Posterior vena cava (tissue), 2 donors: ENCODE measurements at regions of chr1 and their contacts with region 1.

Region 1: GRCh38 chr1:167687919-167688519 is 33.8 kb upstream of the MPZL1 start:
- DNase-seq: no peak

Region 2: DNA sequence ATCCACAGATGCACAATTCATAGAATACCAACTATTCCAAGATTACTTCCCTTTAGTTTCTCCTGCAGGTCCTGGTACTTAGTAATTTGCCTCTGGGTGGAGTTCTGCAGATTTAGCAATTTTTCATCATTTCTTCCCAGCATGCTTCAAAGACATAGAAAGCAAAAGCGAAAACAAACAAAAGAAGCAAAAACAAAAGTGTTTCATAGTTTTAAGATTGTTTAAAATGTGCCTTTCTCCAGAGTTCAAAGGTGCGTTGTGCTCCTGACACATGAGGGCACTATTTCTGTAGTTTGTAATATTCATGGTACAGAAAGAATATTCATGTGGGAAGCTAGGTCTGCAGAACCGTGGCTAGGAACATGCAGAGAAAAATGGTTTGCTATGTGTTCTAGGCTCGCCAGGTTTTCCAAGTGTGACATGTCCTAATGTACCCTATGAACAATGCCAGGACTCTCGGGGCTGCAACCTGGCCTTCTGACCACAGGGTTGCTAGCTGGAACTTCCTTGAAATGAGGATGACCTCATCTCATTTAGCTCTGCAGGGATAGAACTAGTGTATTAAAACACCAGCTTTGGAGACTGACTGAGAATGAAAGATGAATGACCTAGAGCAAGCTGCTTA is 88.0 kb before region 1 on chr1:
- intact Hi-C with region 1: loop called (anchors 5 kb)
- DNase-seq: no peak

Region 3: GRCh38 chr1:167629681-167630567 is 58.1 kb before region 1 on chr1 and contains the start of gene RCSD1:
- intact Hi-C with region 1: loop called in 1 of 2 experiments (anchors 10 kb)
- DNase-seq: peak; percentile 84
- total RNA-seq, gene RCSD1: 14.1 to 15.2 TPM